ENCODE measurements at regions of chr14 and their contacts with region 1.

Region 1: GRCh38 chr14:96275177-96276112 is 19.4 kb downstream of the BDKRB1 start:
- DNase-seq: peak; percentile 78
- ATAC-seq: peak; percentile 60
- H3K4me3 Mint-ChIP-seq: no peak overlapping the region
- H3K27ac Mint-ChIP-seq: no peak overlapping the region
- H3K4me1 Mint-ChIP-seq: peaks cover 2% of the 10 kb centered on the region
- H3K27me3 Mint-ChIP-seq: peaks cover 1% of the 10 kb centered on the region
- CTCF ChIP-seq: peak; percentile 96

Region 2: GRCh38 chr14:96100161-96101029 is 175.1 kb before region 1 on chr14:
- CTCF ChIA-PET with region 1: interaction called, 75 read pairs
- POLR2A ChIA-PET with region 1: no interaction called
- intact Hi-C with region 1: loop called (anchors 2 kb)
- DNase-seq: peak; percentile 82
- ATAC-seq: peak; percentile 72
- H3K4me3 Mint-ChIP-seq: no peak overlapping the region
- H3K27ac Mint-ChIP-seq: no peak overlapping the region
- H3K4me1 Mint-ChIP-seq: no peaks in the 10 kb centered on the region
- H3K27me3 Mint-ChIP-seq: peaks cover 5% of the 10 kb centered on the region
- CTCF ChIP-seq: peak; percentile 73

Region 3: GRCh38 chr14:96260341-96260821 is 15.1 kb before region 1 on chr14:
- CTCF ChIA-PET with region 1: interaction called, 23 read pairs
- POLR2A ChIA-PET with region 1: no interaction called
- intact Hi-C with region 1: no loop called
- DNase-seq: no peak
- ATAC-seq: no peak
- H3K4me3 Mint-ChIP-seq: no peak overlapping the region
- H3K27ac Mint-ChIP-seq: no peak overlapping the region
- H3K4me1 Mint-ChIP-seq: no peaks in the 10 kb centered on the region
- H3K27me3 Mint-ChIP-seq: peaks cover 16% of the 10 kb centered on the region
- CTCF ChIP-seq: no peak

Region 4: DNA sequence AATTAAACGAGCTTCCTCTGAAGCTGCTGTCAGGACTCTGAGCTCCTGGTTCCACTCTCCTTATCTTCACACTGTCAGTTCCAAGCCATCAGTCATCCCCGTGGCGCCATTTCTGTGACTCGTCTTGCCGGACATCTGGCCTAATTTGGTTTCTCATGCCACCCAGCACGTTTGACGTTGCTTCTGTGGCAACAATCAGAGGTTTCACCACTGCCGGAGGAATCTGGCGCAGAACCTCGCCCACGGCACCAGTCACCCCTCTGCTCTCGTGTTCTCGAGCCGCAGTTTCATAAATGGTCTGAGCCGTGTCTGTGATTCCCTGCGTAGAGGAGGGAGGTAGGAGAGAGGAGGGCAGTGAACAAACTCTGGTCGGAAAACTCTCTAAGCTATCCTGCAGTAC is 10.2 kb after region 1 on chr14:
- CTCF ChIA-PET with region 1: interaction called, 27 read pairs
- POLR2A ChIA-PET with region 1: no interaction called
- intact Hi-C with region 1: no loop called
- DNase-seq: no peak
- ATAC-seq: no peak
- H3K4me3 Mint-ChIP-seq: no peak overlapping the region
- H3K27ac Mint-ChIP-seq: no peak overlapping the region
- H3K4me1 Mint-ChIP-seq: no peaks in the 10 kb centered on the region
- H3K27me3 Mint-ChIP-seq: no peaks in the 10 kb centered on the region
- CTCF ChIP-seq: no peak

Region 5: GRCh38 chr14:96357216-96357615 is 81.8 kb after region 1 on chr14:
- CTCF ChIA-PET with region 1: no interaction called
- POLR2A ChIA-PET with region 1: no interaction called
- intact Hi-C with region 1: no loop called
- DNase-seq: no peak
- ATAC-seq: no peak
- H3K4me3 Mint-ChIP-seq: no peak overlapping the region
- H3K27ac Mint-ChIP-seq: peak overlapping the region; percentile 47
- H3K4me1 Mint-ChIP-seq: peaks cover 54% of the 10 kb centered on the region
- H3K27me3 Mint-ChIP-seq: no peaks in the 10 kb centered on the region
- CTCF ChIP-seq: no peak

Region 6: DNA sequence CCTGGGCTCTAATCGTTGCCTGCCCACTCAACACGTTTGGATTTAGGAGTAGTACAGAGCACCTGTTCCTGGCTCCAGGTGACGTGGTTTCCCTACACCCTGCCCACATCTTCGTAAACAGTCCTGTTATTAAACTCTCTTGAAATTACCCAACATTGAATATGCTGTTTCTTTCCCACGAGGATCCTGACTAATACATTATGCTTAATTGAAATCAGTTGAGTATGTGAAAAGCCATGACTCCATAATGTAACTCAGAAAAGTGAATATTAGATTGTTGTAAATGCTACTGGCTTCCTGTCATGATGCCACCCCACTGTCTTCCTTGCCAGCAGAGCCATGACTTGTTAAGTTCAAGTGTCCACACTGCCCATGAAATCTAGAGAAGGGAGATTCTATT is 138.1 kb after region 1 on chr14:
- CTCF ChIA-PET with region 1: no interaction called
- POLR2A ChIA-PET with region 1: no interaction called
- intact Hi-C with region 1: no loop called
- DNase-seq: no peak
- ATAC-seq: no peak
- H3K4me3 Mint-ChIP-seq: no peak overlapping the region
- H3K27ac Mint-ChIP-seq: no peak overlapping the region
- H3K4me1 Mint-ChIP-seq: no peaks in the 10 kb centered on the region
- H3K27me3 Mint-ChIP-seq: no peaks in the 10 kb centered on the region
- CTCF ChIP-seq: no peak

Measured in activated CD8-positive, alpha-beta T cell treated with anti-CD3 and anti-CD28 coated beads for 36 hours (primary cell).